Endothelial cell of umbilical vein (primary cell): ENCODE measurements at regions of chr17 and their contacts with region 1.

Region 1: GRCh38 chr17:29931231-29931932 is 1.4 kb upstream of the SSH2 start:
- DNase-seq: peak; percentile 86
- H3K4me3 ChIP-seq: peak overlapping the region in 1 of 3 experiments; percentile 66
- H3K27ac ChIP-seq: no peak overlapping the region
- H3K4me1 ChIP-seq: peaks cover 34% of the 10 kb centered on the region
- H3K27me3 ChIP-seq: no peaks in the 10 kb centered on the region
- CTCF ChIP-seq: peak; percentile 81 to 87
- POLR2A ChIP-seq: no peak

Region 2: GRCh38 chr17:29807520-29808351 is 123.6 kb before region 1 on chr17:
- CTCF ChIA-PET with region 1: interaction called, 428 read pairs
- POLR2A ChIA-PET with region 1: no interaction called
- dilution Hi-C with region 1: no loop called
- intact Hi-C with region 1: loop called (anchors 1 kb)
- DNase-seq: peak; percentile 67
- H3K4me3 ChIP-seq: no peak overlapping the region
- H3K27ac ChIP-seq: no peak overlapping the region
- H3K4me1 ChIP-seq: no peaks in the 10 kb centered on the region
- H3K27me3 ChIP-seq: no peaks in the 10 kb centered on the region
- CTCF ChIP-seq: peak; percentile 61 to 64
- POLR2A ChIP-seq: no peak

Region 3: GRCh38 chr17:29838961-29839360 is 92.4 kb before region 1 on chr17:
- CTCF ChIA-PET with region 1: interaction called, 10 read pairs
- POLR2A ChIA-PET with region 1: no interaction called
- dilution Hi-C with region 1: no loop called
- intact Hi-C with region 1: no loop called
- DNase-seq: no peak
- H3K4me3 ChIP-seq: no peak overlapping the region
- H3K27ac ChIP-seq: no peak overlapping the region
- H3K4me1 ChIP-seq: peaks cover 7% of the 10 kb centered on the region
- H3K27me3 ChIP-seq: no peaks in the 10 kb centered on the region
- CTCF ChIP-seq: no peak
- POLR2A ChIP-seq: no peak

Region 4: DNA sequence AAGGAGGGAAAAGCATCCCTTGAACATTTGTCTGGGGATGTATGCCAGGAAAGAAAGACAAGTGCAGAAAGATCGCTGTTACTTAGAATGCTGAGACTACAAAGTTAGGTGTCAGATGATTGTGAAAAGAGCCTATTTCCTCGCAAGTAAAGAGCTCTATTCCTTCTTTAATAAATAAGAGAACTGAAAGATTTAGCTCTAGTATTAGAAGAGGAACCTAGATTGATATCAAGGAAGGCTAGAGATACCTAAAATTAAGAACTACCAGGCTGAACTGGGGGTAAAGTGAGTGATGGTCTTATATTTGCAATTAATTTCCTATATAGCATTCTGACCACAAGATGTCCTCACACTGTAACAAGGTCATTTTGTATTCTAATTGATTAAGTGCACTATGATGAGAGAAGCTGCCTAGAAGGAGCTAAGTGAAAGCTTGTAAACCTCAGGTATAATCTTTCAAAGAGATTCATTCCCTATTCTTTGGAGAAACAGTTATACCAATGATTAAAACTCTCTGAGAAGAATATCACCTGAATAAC is 63.7 kb before region 1 on chr17:
- CTCF ChIA-PET with region 1: interaction called, 201 read pairs
- POLR2A ChIA-PET with region 1: no interaction called
- dilution Hi-C with region 1: no loop called
- intact Hi-C with region 1: loop called (anchors 1 kb)
- DNase-seq: peak; percentile 40
- H3K4me3 ChIP-seq: no peak overlapping the region
- H3K27ac ChIP-seq: no peak overlapping the region
- H3K4me1 ChIP-seq: no peaks in the 10 kb centered on the region
- H3K27me3 ChIP-seq: no peaks in the 10 kb centered on the region
- CTCF ChIP-seq: no peak
- POLR2A ChIP-seq: no peak

Region 5: DNA sequence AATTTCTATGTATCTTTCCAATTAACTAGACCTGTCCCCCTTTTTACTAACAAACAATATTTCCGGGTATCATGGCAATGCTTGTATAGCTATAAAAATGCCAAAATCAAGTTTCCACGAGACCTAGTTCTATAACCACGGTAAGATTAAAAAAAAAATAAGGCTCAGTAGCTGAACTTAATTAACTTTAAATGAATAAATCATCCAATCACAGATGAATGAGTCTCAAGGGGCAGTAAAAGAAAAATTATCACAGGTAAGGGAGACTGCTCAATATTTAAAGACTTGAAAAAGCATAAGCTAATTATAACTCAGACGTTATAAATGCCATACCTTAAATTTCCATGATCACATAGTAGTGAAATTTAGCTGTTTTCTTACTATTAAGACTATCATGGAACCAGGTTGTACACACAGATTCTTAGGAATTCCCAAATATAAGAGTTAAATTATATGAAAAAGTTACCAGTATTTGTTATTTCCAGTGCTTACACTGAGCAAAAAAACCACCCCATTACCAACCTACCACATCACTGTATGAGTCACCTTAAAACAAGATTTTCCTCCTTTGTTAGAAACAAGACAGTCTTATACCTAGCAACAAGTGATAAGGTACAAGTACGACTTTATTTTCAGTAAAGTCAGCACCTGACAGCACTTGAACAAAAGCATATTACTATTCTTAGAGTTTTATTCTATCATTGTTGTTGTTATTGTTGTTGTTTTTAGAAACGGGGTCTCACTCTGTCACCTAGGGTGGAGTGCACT is 22.0 kb before region 1 on chr17:
- CTCF ChIA-PET with region 1: interaction called, 10 read pairs
- POLR2A ChIA-PET with region 1: interaction called, 3 read pairs
- dilution Hi-C with region 1: no loop called
- intact Hi-C with region 1: no loop called
- DNase-seq: no peak
- H3K4me3 ChIP-seq: no peak overlapping the region
- H3K27ac ChIP-seq: no peak overlapping the region
- H3K4me1 ChIP-seq: no peaks in the 10 kb centered on the region
- H3K27me3 ChIP-seq: no peaks in the 10 kb centered on the region
- CTCF ChIP-seq: no peak
- POLR2A ChIP-seq: no peak

Region 6: GRCh38 chr17:29972277-29972676 is 40.9 kb after region 1 on chr17:
- CTCF ChIA-PET with region 1: no interaction called
- POLR2A ChIA-PET with region 1: no interaction called
- dilution Hi-C with region 1: no loop called
- intact Hi-C with region 1: no loop called
- DNase-seq: no peak
- H3K4me3 ChIP-seq: no peak overlapping the region
- H3K27ac ChIP-seq: no peak overlapping the region
- H3K4me1 ChIP-seq: no peaks in the 10 kb centered on the region
- H3K27me3 ChIP-seq: no peaks in the 10 kb centered on the region
- CTCF ChIP-seq: no peak
- POLR2A ChIP-seq: no peak

Region 7: GRCh38 chr17:30021708-30022317 is 90.4 kb after region 1 on chr17:
- CTCF ChIA-PET with region 1: interaction called, 20 read pairs
- POLR2A ChIA-PET with region 1: no interaction called
- dilution Hi-C with region 1: no loop called
- intact Hi-C with region 1: no loop called
- DNase-seq: peak; percentile 71
- H3K4me3 ChIP-seq: no peak overlapping the region
- H3K27ac ChIP-seq: no peak overlapping the region
- H3K4me1 ChIP-seq: peaks cover 2% of the 10 kb centered on the region
- H3K27me3 ChIP-seq: no peaks in the 10 kb centered on the region
- CTCF ChIP-seq: peak; percentile 58 to 59
- POLR2A ChIP-seq: no peak

Region 8: DNA sequence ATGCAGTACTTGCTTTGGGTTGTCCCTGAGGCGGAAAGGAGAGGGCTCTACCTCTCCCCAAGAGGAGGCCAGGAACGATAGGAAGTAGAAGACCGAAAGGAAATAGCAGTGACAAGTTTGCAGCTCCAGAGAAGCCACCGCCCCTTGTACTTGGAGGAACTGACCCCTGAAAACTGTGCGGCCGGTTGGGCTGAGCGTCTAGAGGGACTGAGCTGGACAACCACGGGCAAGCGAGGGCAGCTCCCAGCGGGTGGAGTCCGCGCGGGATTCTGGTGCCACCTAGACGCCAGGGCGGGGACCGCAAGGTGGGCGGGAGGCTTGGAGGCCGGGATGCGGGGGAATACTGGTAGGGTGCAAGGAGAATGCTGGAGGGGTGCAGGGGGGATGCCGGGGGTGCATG is 305.4 kb after region 1 on chr17:
- CTCF ChIA-PET with region 1: no interaction called
- POLR2A ChIA-PET with region 1: no interaction called
- dilution Hi-C with region 1: no loop called
- intact Hi-C with region 1: no loop called
- DNase-seq: peak; percentile 44
- H3K4me3 ChIP-seq: no peak overlapping the region
- H3K27ac ChIP-seq: no peak overlapping the region
- H3K4me1 ChIP-seq: peaks cover 8% of the 10 kb centered on the region
- H3K27me3 ChIP-seq: peaks cover 51 to 54% of the 10 kb centered on the region in 2 experiments
- CTCF ChIP-seq: peak; percentile 26 to 65
- POLR2A ChIP-seq: no peak